Activated CD4-positive, alpha-beta memory T cell treated with anti-CD3 and anti-CD28 coated beads, Interleukin-2, amount 10 ng/mL, durations not matched to agents 7 days and 5 days (primary cell): ENCODE measurements at regions of chr15 and their contacts with region 1.

Region 1: GRCh38 chr15:40763801-40764732 is at the start of gene GCHFR:
- DNase-seq: peak; percentile 77
- H3K4me3 Mint-ChIP-seq: peak within 1 kb of the TSS; percentile 76
- H3K27ac Mint-ChIP-seq: peak within 1 kb of the TSS; percentile 83
- H3K4me1 Mint-ChIP-seq: peaks cover 44% of the 10 kb centered on the region
- H3K27me3 Mint-ChIP-seq: no peaks in the 10 kb centered on the region
- total RNA-seq, gene GCHFR: 39.4 to 39.6 TPM

Region 2: GRCh38 chr15:40660686-40661085 is 103.4 kb before region 1 on chr15:
- CTCF ChIA-PET with region 1: no interaction called
- POLR2A ChIA-PET with region 1: no interaction called
- DNase-seq: no peak
- H3K4me3 Mint-ChIP-seq: no peak overlapping the region
- H3K27ac Mint-ChIP-seq: no peak overlapping the region
- H3K4me1 Mint-ChIP-seq: no peaks in the 10 kb centered on the region
- H3K27me3 Mint-ChIP-seq: no peaks in the 10 kb centered on the region

Region 3: GRCh38 chr15:40776522-40777137 is 12.6 kb after region 1 on chr15:
- CTCF ChIA-PET with region 1: interaction called, 7 read pairs
- POLR2A ChIA-PET with region 1: interaction called, 34 read pairs
- DNase-seq: peak; percentile 69
- H3K4me3 Mint-ChIP-seq: no peak overlapping the region
- H3K27ac Mint-ChIP-seq: peak overlapping the region; percentile 83
- H3K4me1 Mint-ChIP-seq: peaks cover 10% of the 10 kb centered on the region
- H3K27me3 Mint-ChIP-seq: no peaks in the 10 kb centered on the region